ENCODE measurements at regions of chr2 and their contacts with region 1.

Region 1: GRCh38 chr2:108533832-108534583 is at the start of gene LIMS1:
- DNase-seq: peak; percentile 93
- H3K4me3 Mint-ChIP-seq: peak within 1 kb of the TSS; percentile 97
- H3K27ac Mint-ChIP-seq: peak within 1 kb of the TSS; percentile 98
- H3K4me1 Mint-ChIP-seq: peaks cover 40% of the 10 kb centered on the region
- H3K27me3 Mint-ChIP-seq: no peaks in the 10 kb centered on the region
- total RNA-seq, gene LIMS1: 63.1 and 66.0 TPM in 2 replicates

Region 2: GRCh38 chr2:108448678-108449493 is 85.1 kb before region 1 on chr2 and contains the start of gene GCC2:
- intact Hi-C with region 1: loop called (anchors 1 kb)
- DNase-seq: peak; percentile 99
- H3K4me3 Mint-ChIP-seq: peak within 1 kb of the TSS; percentile 100
- H3K27ac Mint-ChIP-seq: peak within 1 kb of the TSS; percentile 98
- H3K4me1 Mint-ChIP-seq: peaks cover 27% of the 10 kb centered on the region
- H3K27me3 Mint-ChIP-seq: no peaks in the 10 kb centered on the region
- total RNA-seq, gene GCC2: 38.1 and 43.4 TPM in 2 replicates

Region 3: DNA sequence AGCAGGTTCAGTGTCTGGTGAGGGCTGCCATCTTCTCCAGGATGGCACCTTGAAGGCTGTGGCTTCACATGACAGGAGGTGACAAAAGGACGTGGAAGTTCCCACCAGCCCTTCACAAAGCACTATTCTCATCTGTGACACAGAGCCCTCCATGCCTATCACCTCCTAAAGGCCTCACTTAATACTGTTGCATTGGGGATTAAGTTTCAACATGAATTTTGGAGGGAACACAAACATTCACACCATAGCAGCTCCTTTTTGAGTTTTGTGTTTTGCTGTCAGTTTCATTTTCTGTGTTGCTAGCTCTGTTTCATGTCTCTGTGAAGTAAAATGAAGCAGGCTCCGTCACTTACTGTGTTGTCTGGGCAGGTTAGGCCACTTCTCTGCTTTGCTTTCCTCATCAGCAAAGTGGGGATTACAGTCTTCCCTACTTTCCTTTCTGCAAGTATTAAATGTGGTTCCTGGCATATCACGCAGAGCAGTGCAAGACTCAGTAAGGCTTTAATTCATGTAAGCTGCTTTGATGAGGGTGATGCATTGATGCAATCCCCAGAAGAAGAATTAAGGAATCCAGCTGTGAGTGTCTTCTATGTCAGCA is 31.9 kb after region 1 on chr2:
- intact Hi-C with region 1: no loop called
- DNase-seq: peak; percentile 64
- H3K4me3 Mint-ChIP-seq: peak overlapping the region; percentile 51
- H3K27ac Mint-ChIP-seq: peak overlapping the region; percentile 78
- H3K4me1 Mint-ChIP-seq: peaks cover 10% of the 10 kb centered on the region
- H3K27me3 Mint-ChIP-seq: no peaks in the 10 kb centered on the region

Region 4: DNA sequence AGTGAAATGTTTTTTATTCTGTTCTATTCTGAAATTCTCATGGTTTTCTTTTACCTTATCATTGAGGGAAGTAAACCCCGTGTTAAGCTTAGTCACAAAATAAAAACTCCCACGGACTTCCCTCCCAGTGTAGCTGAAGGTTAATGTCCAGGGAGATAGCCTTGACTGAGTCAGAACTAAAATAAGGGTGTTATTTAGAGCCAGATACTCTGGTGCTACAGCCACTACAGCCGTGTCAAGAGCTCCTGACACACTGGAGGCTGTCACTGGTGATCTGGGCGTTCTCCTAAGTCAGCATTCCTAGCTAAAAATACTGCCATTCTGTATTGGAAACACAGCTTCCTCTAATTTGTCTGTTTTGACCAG is 103.3 kb after region 1 on chr2:
- intact Hi-C with region 1: loop called (anchors 10 kb)
- DNase-seq: no peak
- H3K4me3 Mint-ChIP-seq: peak overlapping the region; percentile 45
- H3K27ac Mint-ChIP-seq: peak overlapping the region; percentile 79
- H3K4me1 Mint-ChIP-seq: peaks cover 60% of the 10 kb centered on the region
- H3K27me3 Mint-ChIP-seq: no peaks in the 10 kb centered on the region

Measured in activated CD4-positive, alpha-beta T cell treated with anti-CD3 and anti-CD28 coated beads, Interleukin-2, amount 10 ng/mL, durations not matched to agents 24 days and 14 days (primary cell).